Endothelial cell of umbilical vein (primary cell): ENCODE measurements at regions of chr2 and their contacts with region 1.

Region 1: DNA sequence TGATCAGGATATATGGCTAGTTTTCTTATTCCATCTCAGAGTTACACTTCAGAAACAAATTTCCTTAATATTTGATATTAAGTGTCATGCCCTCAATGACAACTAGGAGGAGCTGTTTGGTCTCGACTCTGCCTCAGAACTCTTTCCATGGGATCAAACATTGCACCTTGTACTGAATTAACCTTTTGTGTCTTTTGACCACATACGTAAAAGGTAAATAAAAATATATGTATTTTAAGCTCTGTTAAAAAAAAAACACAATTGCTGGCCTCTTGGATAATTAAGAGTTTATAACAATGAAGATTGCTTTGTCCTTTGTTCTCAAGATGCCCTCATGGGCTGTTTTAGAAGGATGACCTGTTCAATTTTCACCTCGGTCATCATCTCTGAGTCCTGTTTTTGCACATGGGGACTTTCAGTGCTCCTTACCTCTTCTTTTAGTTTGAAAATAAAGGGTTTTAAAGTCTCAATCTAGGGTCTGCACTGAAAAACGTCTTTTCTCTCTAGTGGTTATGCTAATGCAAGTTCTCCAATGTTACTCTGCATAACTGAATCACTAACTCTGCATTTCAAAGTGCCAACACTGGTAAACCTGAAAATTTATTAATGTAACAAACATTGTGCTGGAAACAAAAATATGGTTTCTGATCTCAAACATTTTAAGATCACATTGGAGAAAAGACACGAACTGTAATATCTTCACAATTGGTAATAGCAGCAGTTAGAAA is 18.8 kb upstream of the FN1 start:
- DNase-seq: peak; percentile 73
- H3K4me3 ChIP-seq: no peak overlapping the region
- H3K27ac ChIP-seq: no peak overlapping the region
- H3K4me1 ChIP-seq: peaks cover 2% of the 10 kb centered on the region
- H3K27me3 ChIP-seq: no peaks in the 10 kb centered on the region
- CTCF ChIP-seq: peak; percentile 69
- POLR2A ChIP-seq: no peak

Region 2: DNA sequence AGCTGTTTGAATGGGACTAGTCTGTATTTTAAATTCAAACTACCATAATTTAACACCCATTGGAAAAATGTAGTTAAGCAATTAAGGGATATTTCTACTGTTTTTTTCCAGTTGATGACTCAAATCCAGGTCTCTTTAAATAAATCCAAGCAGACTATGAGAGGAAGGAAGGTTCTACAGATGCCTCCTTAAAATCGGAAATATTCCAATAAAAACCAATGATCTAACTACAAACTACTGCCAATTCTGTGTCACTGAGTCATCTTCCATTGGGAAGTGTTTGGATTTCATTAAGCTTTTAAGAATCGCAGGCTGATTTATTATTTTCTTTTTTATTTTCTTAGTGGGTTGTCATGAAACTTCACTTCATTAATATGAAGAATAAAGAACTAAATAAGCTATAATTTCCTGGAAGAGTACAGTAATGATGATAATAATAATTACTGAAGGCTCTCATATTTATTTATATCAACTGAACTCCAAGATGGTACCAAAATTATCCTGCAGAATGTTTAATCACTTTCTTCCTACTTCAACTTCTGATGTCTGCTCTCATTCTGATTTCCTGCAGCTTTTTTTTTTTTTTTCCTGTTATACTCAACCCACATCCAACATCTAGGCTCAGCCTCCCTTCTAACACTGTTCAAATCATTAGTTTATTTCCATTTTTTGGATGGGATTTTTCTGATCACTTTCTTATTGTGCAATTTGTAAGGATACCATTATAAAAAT is 147.5 kb after region 1 on chr2:
- CTCF ChIA-PET with region 1: interaction called, 16 read pairs
- POLR2A ChIA-PET with region 1: interaction called, 4 read pairs
- dilution Hi-C with region 1: no loop called
- intact Hi-C with region 1: loop called (anchors 2 kb)
- DNase-seq: peak; percentile 97
- H3K4me3 ChIP-seq: peak overlapping the region in 1 of 3 experiments; percentile 19
- H3K27ac ChIP-seq: peak overlapping the region; percentile 85
- H3K4me1 ChIP-seq: peaks cover 24% of the 10 kb centered on the region
- H3K27me3 ChIP-seq: no peaks in the 10 kb centered on the region
- CTCF ChIP-seq: no peak
- POLR2A ChIP-seq: peak; percentile 62

Region 3: GRCh38 chr2:215664847-215665525 is 210.3 kb after region 1 on chr2:
- CTCF ChIA-PET with region 1: no interaction called
- POLR2A ChIA-PET with region 1: no interaction called
- dilution Hi-C with region 1: no loop called
- intact Hi-C with region 1: loop called (anchors 2 kb)
- DNase-seq: peak; percentile 88
- H3K4me3 ChIP-seq: no peak overlapping the region
- H3K27ac ChIP-seq: peak overlapping the region; percentile 76
- H3K4me1 ChIP-seq: peaks cover 17% of the 10 kb centered on the region
- H3K27me3 ChIP-seq: no peaks in the 10 kb centered on the region
- CTCF ChIP-seq: no peak
- POLR2A ChIP-seq: no peak

Region 4: DNA sequence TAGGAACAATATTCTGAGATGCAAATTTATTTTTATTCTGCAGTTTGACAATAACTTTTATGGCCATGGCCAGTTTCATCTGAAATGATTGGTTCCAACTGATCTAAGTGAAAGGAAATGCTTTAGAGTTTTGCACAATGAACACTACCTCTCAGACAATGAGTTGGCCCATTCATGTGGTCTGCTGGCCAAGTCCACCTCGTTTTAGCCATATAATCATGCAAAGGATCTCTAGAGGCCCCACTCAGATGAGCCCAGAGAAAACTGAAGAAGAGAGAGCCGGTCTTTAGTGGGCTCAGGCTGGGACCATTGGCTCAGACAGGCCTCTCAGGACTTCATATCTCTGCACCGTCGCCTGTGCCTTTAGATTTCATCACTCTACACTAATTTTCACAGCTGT is 304.0 kb after region 1 on chr2:
- CTCF ChIA-PET with region 1: no interaction called
- POLR2A ChIA-PET with region 1: no interaction called
- dilution Hi-C with region 1: no loop called
- intact Hi-C with region 1: loop called (anchors 5 kb)
- DNase-seq: peak; percentile 87
- H3K4me3 ChIP-seq: no peak overlapping the region
- H3K27ac ChIP-seq: peak overlapping the region; percentile 69
- H3K4me1 ChIP-seq: peaks cover 39% of the 10 kb centered on the region
- H3K27me3 ChIP-seq: no peaks in the 10 kb centered on the region
- CTCF ChIP-seq: no peak
- POLR2A ChIP-seq: no peak

Region 5: DNA sequence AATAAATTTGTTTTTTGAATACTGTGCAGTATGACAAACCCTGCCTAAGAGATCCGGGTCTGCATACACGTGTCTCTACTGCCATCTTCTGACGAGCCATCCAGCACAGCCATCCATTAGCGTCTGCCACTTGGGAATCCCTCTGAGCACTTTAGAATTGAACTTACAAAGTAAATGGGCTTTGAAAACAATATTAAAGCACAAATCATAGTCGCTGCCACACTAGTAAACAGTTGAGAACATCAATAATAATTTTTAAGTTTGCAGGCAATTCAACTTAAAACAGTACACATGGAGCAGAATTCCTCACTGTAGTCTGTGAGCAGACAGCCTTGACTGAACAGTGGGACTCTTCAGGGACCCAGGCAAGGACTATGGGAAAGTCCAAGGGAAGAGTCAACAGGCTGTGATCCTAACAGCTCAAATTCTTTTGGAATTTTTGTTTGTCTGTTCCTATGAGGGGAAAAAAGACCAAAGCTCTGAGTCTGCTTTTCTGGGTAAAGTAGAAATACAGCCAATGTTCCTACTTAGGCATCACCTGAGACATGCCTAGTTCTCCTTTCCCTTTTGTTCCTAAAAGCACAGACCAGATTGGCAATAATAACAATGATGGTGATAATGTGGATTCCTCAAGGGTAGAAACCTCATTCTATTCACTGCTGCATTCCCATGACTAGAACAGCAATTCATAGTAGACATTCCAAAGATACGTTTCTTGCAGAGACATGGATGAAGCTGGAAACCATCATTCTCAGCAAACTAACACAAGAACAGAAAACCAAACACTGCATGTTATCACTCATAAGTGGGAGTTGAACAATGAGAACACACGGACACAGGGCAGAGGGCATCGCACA is 465.8 kb after region 1 on chr2:
- CTCF ChIA-PET with region 1: interaction called, 6 read pairs
- POLR2A ChIA-PET with region 1: no interaction called
- dilution Hi-C with region 1: no loop called
- intact Hi-C with region 1: loop called (anchors 1 kb)
- DNase-seq: peak; percentile 87
- H3K4me3 ChIP-seq: no peak overlapping the region
- H3K27ac ChIP-seq: no peak overlapping the region
- H3K4me1 ChIP-seq: peaks cover 12% of the 10 kb centered on the region
- H3K27me3 ChIP-seq: no peaks in the 10 kb centered on the region
- CTCF ChIP-seq: peak; percentile 76 to 93
- POLR2A ChIP-seq: no peak